ENCODE measurements at regions of chr1 and their contacts with region 1.

Region 1: DNA sequence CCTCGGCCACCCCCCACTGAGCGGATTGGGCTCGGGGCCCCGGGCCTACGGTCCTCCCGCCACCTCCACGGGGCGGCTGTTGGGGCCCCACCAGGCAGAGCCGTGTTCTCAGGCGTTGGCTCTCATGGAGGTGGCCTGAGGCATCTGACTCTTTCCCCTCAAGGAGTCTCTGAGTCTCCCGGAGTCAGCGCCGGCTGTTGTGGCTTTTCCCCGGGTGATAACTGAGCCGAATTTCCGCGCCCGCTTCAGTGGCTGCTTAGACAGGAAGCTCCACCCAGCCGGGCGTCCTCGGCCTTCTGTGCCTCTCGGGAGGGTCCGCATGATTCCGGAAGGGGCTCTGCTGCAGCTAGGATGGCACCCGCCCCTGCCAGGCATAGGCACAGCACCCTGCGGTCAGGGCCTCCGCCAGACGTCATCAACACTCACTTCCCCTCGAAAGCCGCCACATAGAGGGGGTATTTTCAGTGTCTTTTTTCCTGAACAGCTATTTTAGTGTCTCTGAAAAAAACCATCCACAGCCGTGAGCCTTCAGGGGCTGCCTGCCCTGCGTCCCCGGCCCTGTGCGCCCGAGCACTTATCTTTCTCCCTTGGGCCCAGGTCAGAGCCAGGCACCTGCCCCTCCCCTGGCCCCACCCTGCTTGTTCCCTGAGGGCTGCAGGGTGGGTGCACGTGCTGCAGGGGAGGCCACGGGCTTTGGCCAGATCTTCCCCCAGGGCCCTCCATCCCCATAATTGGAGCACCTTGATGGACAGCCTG is 72.9 kb downstream of the SKI start:
- DNase-seq: peak; percentile 95
- H3K4me3 Mint-ChIP-seq: peak overlapping the region; percentile 83
- H3K27ac Mint-ChIP-seq: peak overlapping the region; percentile 94
- H3K4me1 Mint-ChIP-seq: peaks cover 27% of the 10 kb centered on the region
- H3K27me3 Mint-ChIP-seq: no peaks in the 10 kb centered on the region

Region 2: DNA sequence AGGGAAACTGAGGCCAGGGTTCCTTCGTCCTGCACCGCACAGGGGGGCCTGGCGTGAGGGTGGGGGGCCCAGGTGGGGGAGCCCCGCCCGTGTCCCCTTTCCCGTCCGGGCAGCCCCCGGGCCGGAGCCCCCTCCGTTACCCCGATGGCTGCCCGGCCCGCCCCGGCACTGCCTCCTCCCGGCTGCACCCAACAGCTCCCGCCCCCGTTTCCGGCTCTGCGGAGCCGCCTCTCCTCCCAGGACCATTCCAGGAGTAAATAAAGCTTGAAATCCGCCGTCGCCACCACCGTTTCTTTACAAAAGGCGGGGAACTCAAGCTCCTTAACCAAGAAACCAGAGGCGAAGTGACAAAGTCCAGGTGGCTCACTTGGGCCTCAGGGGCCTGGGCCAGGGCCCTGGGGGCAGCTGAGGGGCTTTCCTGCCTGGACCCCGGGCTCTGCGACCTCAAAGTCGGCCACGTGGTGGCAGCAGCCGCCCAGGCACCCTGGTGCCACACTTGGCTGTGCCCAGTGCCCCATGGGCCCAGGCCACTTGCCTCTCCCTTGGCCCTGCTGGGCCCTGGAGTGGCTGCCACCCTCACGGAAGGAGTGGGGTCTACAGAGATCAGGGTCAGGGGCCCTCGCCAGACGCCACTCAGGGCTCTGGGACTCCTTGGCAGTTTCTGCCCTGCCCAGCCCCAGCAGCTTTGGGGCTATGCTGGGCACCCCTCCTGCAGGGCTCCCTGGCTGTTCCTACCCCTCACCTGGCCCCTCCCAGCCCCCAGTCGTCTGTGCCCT is 105.9 kb before region 1 on chr1:
- intact Hi-C with region 1: loop called (anchors 2 kb)
- DNase-seq: peak; percentile 97
- H3K4me3 Mint-ChIP-seq: peak overlapping the region; percentile 90
- H3K27ac Mint-ChIP-seq: peak overlapping the region; percentile 93
- H3K4me1 Mint-ChIP-seq: peaks cover 17% of the 10 kb centered on the region
- H3K27me3 Mint-ChIP-seq: no peaks in the 10 kb centered on the region

Region 3: DNA sequence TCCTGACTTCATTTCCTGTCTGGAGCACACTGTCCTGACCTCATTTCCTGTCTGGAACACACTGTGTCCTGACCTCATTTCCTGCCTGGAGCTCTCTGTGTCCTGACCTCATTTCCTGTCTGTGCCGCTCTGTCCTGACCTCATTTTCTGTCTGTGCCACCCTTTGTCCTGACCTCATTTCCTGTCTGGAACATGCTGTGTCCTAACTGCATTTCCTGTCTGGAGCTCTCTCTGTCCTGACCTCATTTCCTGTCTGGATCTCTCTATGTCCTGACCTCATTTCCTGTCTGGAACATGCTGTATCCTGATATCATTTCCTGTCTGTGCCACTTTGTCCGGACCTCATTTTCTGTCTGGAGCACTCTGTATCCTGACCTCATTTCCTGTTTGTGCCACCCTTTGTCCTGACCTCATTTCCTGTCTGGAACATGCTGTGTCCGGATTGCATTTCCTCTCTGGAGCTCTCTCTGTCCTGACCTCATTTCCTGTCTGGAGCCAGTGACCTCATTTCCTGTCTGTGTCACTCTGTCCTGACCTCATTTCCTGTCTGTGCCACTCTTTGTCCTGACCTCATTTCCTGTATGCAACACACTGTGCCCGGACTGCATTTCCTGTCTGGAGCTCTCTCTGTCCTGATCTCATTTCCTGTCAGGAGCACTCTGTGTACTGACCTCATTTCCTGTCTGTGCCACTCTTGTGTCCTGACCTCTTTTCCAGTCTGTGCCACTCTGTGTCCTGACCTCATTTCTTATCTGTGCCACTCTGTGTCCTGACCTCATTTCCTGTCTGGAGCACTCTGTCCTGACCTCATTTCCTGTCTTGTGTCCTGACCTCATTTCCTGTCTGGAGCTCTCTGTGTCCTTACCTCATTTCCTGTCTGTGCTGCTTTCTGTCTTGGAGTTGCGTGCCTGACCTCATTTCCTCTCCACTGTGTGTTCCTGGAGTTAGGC is 45.3 kb before region 1 on chr1:
- intact Hi-C with region 1: loop called (anchors 1 kb)
- DNase-seq: peak; percentile 94
- H3K4me3 Mint-ChIP-seq: no peak overlapping the region
- H3K27ac Mint-ChIP-seq: no peak overlapping the region
- H3K4me1 Mint-ChIP-seq: peaks cover 33% of the 10 kb centered on the region
- H3K27me3 Mint-ChIP-seq: no peaks in the 10 kb centered on the region

Region 4: GRCh38 chr1:2279210-2279639 is 21.8 kb before region 1 on chr1:
- intact Hi-C with region 1: no loop called
- DNase-seq: no peak
- H3K4me3 Mint-ChIP-seq: no peak overlapping the region
- H3K27ac Mint-ChIP-seq: peak overlapping the region; percentile 49
- H3K4me1 Mint-ChIP-seq: peaks cover 8% of the 10 kb centered on the region
- H3K27me3 Mint-ChIP-seq: no peaks in the 10 kb centered on the region

Region 5: GRCh38 chr1:2314803-2315673 is 14.0 kb after region 1 on chr1:
- intact Hi-C with region 1: loop called (anchors 2 kb)
- DNase-seq: peak; percentile 88
- H3K4me3 Mint-ChIP-seq: peak overlapping the region; percentile 60
- H3K27ac Mint-ChIP-seq: peak overlapping the region; percentile 67
- H3K4me1 Mint-ChIP-seq: peaks cover 2% of the 10 kb centered on the region
- H3K27me3 Mint-ChIP-seq: no peaks in the 10 kb centered on the region

Region 6: GRCh38 chr1:2545759-2546514 is 244.9 kb after region 1 on chr1:
- intact Hi-C with region 1: loop called (anchors 5 kb)
- DNase-seq: peak; percentile 97
- H3K4me3 Mint-ChIP-seq: peak overlapping the region; percentile 93
- H3K27ac Mint-ChIP-seq: peak overlapping the region; percentile 95
- H3K4me1 Mint-ChIP-seq: peaks cover 11% of the 10 kb centered on the region
- H3K27me3 Mint-ChIP-seq: peaks cover 8% of the 10 kb centered on the region

Measured in activated CD4-positive, alpha-beta T cell treated with anti-CD3 and anti-CD28 coated beads, Interleukin-2, amount 10 ng/mL, durations not matched to agents 24 days and 14 days (primary cell).